ENCODE measurements at regions of chr19 and their contacts with region 1.

Region 1: DNA sequence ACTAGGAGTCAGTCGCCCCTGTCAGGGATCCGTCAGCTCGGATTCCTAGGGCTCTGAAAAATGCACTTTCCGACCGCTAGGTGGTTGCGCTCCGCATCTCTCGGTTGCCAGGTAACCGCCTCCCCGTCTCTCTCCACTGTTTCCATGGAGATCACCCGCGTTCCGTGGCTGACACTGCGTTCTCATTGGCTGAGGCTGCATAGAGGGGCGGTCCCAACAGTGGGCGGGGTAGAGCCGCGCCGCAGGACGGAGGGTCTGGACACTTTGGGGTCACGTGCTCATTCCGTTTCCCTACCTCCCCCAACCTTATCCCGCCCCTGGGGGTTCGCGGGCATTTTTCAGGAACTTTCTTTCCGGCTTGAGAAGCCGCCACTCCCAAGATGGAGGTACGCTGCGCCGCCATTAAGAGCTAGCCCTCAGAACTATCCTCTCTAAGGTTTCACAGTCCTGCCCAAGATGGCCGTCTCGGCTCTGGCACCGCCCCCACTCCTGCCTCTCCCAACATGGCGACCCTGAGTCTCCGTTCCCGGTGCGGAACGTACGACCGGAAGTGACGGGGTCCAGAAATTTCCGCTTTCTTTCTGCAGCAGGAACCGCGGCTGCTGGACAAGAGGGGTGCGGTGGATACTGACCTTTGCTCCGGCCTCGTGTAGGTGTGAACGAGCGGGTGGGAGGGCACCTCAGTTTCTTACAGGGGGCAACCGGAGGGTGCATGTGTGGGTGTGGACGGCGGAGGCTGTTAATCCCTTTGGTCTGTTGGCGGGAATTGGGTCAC is at the starts of genes ODAD3 and PRKCSH:
- DNase-seq: peak; percentile 99
- H3K4me3 Mint-ChIP-seq: peak within 1 kb of the TSS; percentile 99
- H3K27ac Mint-ChIP-seq: peak within 1 kb of the TSS; percentile 96
- H3K4me1 Mint-ChIP-seq: peaks cover 19% of the 10 kb centered on the region
- H3K27me3 Mint-ChIP-seq: peaks cover 6% of the 10 kb centered on the region
- total RNA-seq, gene ODAD3: not detected in 2 replicates
- total RNA-seq, gene PRKCSH: 322 and 334 TPM in 2 replicates

Region 2: GRCh38 chr19:10928525-10929401 is 506.5 kb before region 1 on chr19 and contains the starts of genes TIMM29 and YIPF2:
- intact Hi-C with region 1: loop called (anchors 1 kb)
- DNase-seq: peak; percentile 92
- H3K4me3 Mint-ChIP-seq: peak within 1 kb of the TSS; percentile 94
- H3K27ac Mint-ChIP-seq: peak within 1 kb of the TSS; percentile 85
- H3K4me1 Mint-ChIP-seq: peaks cover 11% of the 10 kb centered on the region
- H3K27me3 Mint-ChIP-seq: no peaks in the 10 kb centered on the region
- total RNA-seq, gene TIMM29: 22.6 and 22.7 TPM in 2 replicates
- total RNA-seq, gene YIPF2: 28.8 and 29.5 TPM in 2 replicates

Region 3: DNA sequence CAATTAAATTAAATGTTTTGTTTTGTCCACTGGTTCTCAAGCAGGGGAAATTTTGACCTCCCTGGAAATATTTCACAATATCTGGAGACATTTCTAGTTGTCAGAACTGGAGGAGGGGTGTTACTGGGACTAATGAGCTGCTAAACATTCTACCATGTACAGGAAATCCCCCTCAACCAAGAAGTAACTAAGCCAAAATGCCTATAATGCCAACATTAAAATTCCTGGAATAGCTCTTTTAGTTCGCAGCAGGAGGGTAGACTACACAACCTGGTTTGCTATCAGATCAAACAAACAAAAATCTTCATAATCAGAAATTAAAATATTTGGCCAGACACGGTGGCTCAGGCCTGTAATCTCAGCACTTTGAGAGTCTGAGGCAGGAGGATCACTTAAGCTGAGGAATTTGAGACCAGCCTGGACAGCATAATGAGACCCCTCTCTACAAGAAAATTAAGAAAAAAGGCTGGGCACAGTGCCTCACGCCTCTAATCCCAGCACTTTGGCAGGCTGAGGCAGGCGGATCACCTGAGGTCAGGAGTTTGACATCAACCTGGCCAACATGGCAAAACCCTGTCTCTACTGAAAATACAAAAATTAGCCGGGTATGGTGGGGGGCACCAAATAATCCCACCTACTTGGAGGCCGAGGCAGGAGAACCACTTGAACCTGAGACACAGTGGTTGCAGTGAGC is 488.1 kb before region 1 on chr19:
- intact Hi-C with region 1: no loop called
- DNase-seq: no peak
- H3K4me3 Mint-ChIP-seq: no peak overlapping the region
- H3K27ac Mint-ChIP-seq: no peak overlapping the region
- H3K4me1 Mint-ChIP-seq: peaks cover 6% of the 10 kb centered on the region
- H3K27me3 Mint-ChIP-seq: no peaks in the 10 kb centered on the region

Region 4: DNA sequence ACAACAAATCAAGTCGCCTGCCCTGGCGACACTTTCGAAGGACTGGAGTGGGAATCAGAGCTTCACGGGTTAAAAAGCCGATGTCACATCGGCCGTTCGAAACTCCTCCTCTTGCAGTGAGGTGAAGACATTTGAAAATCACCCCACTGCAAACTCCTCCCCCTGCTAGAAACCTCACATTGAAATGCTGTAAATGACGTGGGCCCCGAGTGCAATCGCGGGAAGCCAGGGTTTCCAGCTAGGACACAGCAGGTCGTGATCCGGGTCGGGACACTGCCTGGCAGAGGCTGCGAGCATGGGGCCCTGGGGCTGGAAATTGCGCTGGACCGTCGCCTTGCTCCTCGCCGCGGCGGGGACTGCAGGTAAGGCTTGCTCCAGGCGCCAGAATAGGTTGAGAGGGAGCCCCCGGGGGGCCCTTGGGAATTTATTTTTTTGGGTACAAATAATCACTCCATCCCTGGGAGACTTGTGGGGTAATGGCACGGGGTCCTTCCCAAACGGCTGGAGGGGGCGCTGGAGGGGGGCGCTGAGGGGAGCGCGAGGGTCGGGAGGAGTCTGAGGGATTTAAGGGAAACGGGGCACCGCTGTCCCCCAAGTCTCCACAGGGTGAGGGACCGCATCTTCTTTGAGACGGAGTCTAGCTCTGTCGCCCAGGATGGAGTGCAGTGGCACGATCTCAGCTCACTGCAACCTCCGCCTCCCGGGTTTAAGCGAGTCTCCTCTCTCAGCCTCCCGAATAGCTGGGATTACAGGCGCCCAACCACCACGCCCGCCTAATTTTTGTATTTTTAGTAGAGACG is 345.8 kb before region 1 on chr19 and contains the start of gene LDLR:
- intact Hi-C with region 1: no loop called
- DNase-seq: peak; percentile 88
- H3K4me3 Mint-ChIP-seq: peak within 1 kb of the TSS; percentile 98
- H3K27ac Mint-ChIP-seq: peak within 1 kb of the TSS; percentile 99
- H3K4me1 Mint-ChIP-seq: peaks cover 37% of the 10 kb centered on the region
- H3K27me3 Mint-ChIP-seq: no peaks in the 10 kb centered on the region
- total RNA-seq, gene LDLR: 115 and 117 TPM in 2 replicates

Region 5: DNA sequence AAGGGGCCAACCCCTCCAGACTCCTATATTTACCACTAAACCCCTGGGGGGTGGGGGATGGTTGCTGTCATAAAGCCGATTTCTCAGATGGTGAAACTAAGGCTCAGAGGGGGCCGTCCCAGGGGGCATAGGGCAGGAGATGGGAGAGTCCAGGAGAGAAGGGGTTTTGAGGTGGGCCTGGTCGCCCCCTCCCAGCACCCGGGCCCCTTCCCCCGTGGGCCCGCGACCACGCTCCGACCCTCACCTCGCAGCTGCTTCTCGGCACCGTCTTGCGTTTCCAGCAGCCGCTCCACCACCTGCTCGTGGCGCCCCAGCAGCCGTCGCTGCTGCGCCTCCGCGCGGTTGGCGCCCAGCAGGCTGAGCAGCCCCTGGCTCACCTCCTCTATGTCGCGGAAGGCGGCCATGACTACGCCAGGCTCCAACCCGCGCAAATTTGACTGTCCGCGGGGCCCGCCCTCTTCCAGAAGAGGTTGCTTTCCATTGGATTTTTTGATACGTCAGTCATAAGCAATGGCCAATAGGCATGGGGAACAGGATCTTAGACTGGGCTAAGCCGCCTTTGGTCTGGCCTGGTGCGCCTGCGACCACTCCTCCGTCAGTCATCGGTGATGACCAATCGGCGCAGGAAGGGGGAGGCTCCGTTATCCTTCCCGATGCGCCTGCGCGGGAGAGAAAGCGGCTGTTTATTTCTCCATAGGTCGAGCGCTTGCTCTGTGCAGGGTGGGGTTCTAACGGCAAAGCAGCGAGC is 279.7 kb before region 1 on chr19 and contains the start of gene SPC24:
- intact Hi-C with region 1: loop called (anchors 1 kb)
- DNase-seq: peak; percentile 94
- H3K4me3 Mint-ChIP-seq: peak within 1 kb of the TSS; percentile 84
- H3K27ac Mint-ChIP-seq: peak within 1 kb of the TSS; percentile 89
- H3K4me1 Mint-ChIP-seq: peaks cover 7% of the 10 kb centered on the region
- H3K27me3 Mint-ChIP-seq: no peaks in the 10 kb centered on the region
- total RNA-seq, gene SPC24: 30.3 and 30.4 TPM in 2 replicates

Region 6: GRCh38 chr19:11374433-11375142 is 60.7 kb before region 1 on chr19 and contains the start of gene SWSAP1:
- intact Hi-C with region 1: loop called (anchors 1 kb)
- DNase-seq: peak; percentile 97
- H3K4me3 Mint-ChIP-seq: no peak within 1 kb of the TSS
- H3K27ac Mint-ChIP-seq: no peak within 1 kb of the TSS
- H3K4me1 Mint-ChIP-seq: peaks cover 31% of the 10 kb centered on the region
- H3K27me3 Mint-ChIP-seq: no peaks in the 10 kb centered on the region
- total RNA-seq, gene SWSAP1: 3.2 and 3.9 TPM in 2 replicates

Region 7: DNA sequence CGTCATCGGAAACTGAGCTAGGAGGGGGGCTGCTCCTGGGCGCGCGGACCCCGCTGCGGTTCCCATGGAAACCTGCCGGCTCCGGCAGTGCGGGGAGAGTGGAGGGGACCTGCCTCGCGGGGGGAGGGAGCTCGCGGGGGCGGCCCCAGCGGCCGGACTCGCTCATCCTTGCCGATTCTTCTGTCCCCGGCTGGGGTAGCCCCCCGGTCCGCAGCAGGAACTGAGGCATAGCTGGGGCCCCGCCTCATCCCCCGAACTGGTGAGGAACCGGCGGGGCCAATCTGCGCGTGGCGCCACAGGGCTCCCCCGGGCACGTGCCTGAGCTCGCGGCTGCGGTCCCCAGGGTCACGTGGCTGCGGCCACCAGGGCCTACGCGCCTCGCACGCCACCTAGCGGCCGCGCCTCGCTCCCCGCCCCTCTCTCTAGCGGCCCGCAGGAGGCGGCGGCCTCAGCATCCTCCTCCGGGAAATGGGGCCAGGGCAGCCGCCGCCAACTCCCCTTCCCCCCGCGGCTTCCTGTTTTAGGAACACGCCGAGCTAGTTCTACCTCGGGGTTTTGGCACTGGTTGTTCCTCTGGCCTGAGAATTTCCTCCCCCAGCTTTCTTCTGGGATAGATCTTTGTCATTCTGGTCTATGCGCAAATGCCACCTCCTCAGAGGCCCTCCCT is 47.3 kb after region 1 on chr19:
- intact Hi-C with region 1: loop called (anchors 1 kb)
- DNase-seq: peak; percentile 84
- H3K4me3 Mint-ChIP-seq: peak overlapping the region; percentile 82
- H3K27ac Mint-ChIP-seq: peak overlapping the region; percentile 88
- H3K4me1 Mint-ChIP-seq: peaks cover 16% of the 10 kb centered on the region
- H3K27me3 Mint-ChIP-seq: peaks cover 25% of the 10 kb centered on the region

Region 8: DNA sequence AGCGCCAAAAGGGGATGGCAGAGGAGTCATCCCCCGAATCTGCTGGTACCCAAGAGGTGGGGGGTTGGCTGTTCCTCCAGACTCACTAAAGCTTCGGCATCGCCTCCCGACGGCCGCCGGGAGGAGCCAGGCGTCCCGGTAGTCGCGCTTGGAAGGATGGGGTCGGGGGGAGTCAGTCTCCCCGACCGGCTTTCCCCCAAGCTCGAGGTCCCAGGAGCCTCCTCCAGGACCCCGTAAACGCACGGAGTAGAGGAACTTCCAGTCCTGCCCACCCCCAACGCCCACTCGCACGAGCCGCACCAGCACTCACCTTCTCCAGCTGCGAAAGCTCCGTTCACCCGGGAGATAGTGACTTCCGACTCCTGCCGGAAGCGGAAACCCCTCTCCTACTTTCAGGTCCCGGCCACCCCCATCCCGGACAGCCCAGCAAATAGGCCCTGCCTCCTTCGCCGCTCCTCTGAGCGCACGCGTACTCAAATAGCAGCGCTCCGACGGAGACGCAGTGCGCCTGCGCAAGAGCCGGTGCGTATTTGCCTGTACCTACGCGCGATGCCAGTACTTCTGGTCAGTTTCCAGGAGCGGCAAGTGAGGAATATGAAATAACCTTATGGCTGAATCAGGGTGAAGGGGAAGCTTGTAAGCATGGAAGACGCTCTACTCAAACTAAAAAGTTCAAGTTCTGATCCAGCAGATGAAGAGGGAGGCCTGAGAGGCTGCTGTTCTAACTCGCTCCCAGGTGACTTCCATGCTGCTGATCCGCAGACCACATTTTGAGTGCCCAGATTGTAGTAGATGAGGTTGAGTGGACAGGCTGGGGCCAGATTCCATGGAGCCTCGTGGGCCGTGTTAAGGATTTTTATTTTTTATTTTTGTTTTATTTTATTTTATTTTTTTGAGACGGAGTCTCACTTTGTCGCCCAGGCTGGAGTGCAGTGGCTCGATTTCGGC is 123.9 kb after region 1 on chr19 and contains the start of gene ELOF1:
- intact Hi-C with region 1: loop called (anchors 1 kb)
- DNase-seq: peak; percentile 97
- H3K4me3 Mint-ChIP-seq: peak within 1 kb of the TSS; percentile 92
- H3K27ac Mint-ChIP-seq: peak within 1 kb of the TSS; percentile 96
- H3K4me1 Mint-ChIP-seq: peaks cover 42% of the 10 kb centered on the region
- H3K27me3 Mint-ChIP-seq: no peaks in the 10 kb centered on the region
- total RNA-seq, gene ELOF1: 76.7 and 77.6 TPM in 2 replicates

Region 9: DNA sequence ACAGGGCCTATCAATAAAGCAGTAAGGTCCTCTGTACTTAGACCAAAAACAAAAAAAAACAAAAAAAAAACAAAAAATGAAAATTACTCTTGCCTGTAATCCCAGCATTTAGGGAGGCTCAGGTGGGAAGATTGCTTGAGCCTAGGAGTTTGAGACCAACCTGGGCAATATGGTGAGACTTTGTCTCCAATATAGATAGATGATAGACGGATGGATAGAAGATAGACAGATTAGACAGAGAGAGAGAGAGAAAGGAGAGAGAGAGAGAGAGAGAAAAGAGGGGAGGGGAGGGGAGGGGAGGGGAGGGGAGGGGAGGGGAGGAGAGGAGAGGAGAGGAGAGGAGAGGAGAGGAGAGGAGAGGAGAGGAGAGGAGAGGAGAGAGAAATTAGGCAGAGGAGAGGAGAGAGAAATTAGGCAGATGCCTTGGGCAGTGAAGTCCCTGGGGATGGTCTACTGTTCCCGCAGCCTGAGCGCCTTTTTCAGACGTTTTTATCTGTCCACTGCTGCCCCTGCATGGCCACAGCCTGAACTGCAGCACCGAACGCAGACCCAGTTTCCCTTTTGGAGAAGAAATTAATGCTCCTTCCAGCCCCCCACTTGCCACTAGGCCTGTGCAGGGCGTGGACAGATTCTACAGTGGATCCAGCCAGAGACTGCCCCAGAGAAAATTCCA is 152.2 kb after region 1 on chr19:
- intact Hi-C with region 1: no loop called
- DNase-seq: peak; percentile 70
- H3K4me3 Mint-ChIP-seq: no peak overlapping the region
- H3K27ac Mint-ChIP-seq: peak overlapping the region; percentile 9
- H3K4me1 Mint-ChIP-seq: peaks cover 12% of the 10 kb centered on the region
- H3K27me3 Mint-ChIP-seq: peaks cover 2% of the 10 kb centered on the region